BJ (cell line): ENCODE measurements at regions of chr12 and their contacts with region 1.

Region 1: GRCh38 chr12:6470375-6471163 is at the start of gene VAMP1:
- DNase-seq: peak; percentile 91
- H3K4me3 ChIP-seq: peak within 1 kb of the TSS; percentile 68
- H3K27me3 ChIP-seq: no peaks in the 10 kb centered on the region
- CTCF ChIP-seq: peak; percentile 2; the same call in 1 of the 2 replicates
- polyA plus RNA-seq, gene VAMP1: 12.5 and 23.3 TPM in 2 replicates

Region 2: DNA sequence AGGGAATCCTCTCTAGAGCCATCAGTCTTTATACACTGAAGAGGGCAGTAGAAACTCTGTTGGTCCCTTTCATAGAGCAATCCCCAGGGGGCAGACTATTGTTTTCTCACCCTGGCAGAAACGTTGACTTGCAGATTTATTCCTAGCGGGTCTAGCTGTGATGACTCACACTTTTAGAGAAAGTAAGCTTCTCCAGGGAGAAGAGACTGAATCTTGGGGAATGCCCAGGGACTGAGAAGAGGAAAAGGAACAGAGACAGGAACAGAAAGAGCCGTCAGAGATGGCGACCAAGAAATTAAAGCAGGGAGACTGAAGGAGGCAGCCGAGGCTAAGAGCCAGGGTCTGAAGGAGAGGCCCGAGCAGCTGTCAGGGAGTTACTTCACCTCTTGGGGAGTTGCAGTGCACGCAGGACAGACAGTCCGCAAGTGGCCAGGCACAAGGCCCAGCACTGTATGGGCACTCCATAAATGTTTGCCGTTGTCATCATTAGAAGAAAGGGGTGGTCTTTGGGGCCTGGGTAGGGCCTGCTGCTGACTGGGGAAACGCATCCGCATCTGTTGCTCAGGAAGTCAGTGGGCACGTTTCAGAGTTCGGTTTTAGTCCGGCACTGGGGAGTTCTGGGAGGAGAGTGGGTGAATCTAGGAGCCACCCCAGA is 147.1 kb before region 1 on chr12:
- CTCF ChIA-PET with region 1: interaction called, 13 read pairs
- POLR2A ChIA-PET with region 1: interaction called, 8 read pairs
- DNase-seq: peak; percentile 74
- H3K4me3 ChIP-seq: no peak overlapping the region
- H3K27me3 ChIP-seq: no peaks in the 10 kb centered on the region
- CTCF ChIP-seq: peak; percentile 75

Region 3: DNA sequence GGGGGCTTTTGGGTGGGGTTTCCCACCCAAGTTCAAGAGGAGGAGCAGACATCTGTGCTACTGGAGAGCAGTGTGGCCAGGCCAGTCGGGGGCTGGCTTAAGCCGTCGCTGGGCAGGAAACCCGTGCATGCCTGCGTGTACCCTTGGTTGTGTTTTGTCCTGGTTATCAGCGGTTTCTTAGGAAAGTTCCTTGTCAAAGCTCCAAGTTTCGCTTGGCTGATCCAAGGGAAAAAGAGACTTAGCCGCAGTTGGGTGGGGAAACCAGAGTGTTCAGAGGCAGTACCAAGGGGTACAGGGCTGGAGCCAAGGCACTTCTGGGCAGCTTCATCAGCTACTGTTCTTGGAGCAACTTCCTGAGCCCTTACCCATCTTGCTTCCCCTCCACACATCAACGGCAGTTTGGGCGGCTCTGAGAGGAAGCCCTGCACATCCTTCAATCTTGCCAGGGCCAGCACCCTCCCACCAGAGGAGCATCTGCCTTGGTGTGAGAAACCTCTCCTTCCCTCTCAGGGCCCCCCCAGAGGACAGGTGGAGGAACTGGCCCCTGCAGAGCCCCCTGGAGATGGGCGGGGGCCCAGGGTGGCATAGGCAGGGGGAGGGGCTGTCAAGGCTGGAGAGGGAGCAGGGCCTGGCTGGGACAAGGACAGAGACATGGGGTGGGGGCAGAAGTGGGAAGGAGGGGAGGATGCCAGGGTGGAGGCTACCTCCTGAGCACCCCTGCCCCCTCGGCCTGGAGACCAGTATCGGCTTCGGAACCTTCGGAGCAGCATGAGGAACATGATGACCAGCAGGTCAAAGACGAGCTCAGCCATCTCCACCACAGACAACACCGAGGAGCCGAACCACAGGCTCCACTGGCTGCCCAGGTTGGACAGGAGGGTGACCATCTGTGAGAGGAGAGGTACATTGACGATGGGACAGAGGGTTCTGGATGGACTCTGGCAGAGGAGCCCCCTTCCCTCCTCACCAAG is 122.9 kb before region 1 on chr12:
- CTCF ChIA-PET with region 1: interaction called, 4 read pairs
- POLR2A ChIA-PET with region 1: interaction called, 14 read pairs
- DNase-seq: no peak
- H3K4me3 ChIP-seq: no peak overlapping the region
- H3K27me3 ChIP-seq: no peaks in the 10 kb centered on the region
- CTCF ChIP-seq: no peak

Region 4: GRCh38 chr12:6438345-6438744 is 32.2 kb before region 1 on chr12:
- CTCF ChIA-PET with region 1: interaction called, 12 read pairs
- POLR2A ChIA-PET with region 1: no interaction called
- DNase-seq: no peak
- H3K4me3 ChIP-seq: no peak overlapping the region
- H3K27me3 ChIP-seq: no peaks in the 10 kb centered on the region
- CTCF ChIP-seq: no peak

Region 5: GRCh38 chr12:6533923-6534694 is 63.5 kb after region 1 on chr12 and contains the start of gene GAPDH:
- CTCF ChIA-PET with region 1: interaction called, 17 read pairs
- POLR2A ChIA-PET with region 1: interaction called, 28 read pairs
- DNase-seq: peak; percentile 77
- H3K4me3 ChIP-seq: peak within 1 kb of the TSS; percentile 88
- H3K27me3 ChIP-seq: no peaks in the 10 kb centered on the region
- CTCF ChIP-seq: no peak
- polyA plus RNA-seq, gene GAPDH: 12,114 and 18,709 TPM in 2 replicates